Breast epithelium (tissue), 4 donors: ENCODE measurements at regions of chr20 and their contacts with region 1.

Region 1: GRCh38 chr20:63911176-63911575 is 16.2 kb downstream of the DNAJC5 start:
- DNase-seq: no peak
- H3K4me3 ChIP-seq: no peak overlapping the region
- H3K27ac ChIP-seq: no peak overlapping the region
- H3K4me1 ChIP-seq: no peaks in the 10 kb centered on the region
- H3K27me3 ChIP-seq: no peaks in the 10 kb centered on the region
- CTCF ChIP-seq: no peak
- POLR2A ChIP-seq: no peak

Region 2: DNA sequence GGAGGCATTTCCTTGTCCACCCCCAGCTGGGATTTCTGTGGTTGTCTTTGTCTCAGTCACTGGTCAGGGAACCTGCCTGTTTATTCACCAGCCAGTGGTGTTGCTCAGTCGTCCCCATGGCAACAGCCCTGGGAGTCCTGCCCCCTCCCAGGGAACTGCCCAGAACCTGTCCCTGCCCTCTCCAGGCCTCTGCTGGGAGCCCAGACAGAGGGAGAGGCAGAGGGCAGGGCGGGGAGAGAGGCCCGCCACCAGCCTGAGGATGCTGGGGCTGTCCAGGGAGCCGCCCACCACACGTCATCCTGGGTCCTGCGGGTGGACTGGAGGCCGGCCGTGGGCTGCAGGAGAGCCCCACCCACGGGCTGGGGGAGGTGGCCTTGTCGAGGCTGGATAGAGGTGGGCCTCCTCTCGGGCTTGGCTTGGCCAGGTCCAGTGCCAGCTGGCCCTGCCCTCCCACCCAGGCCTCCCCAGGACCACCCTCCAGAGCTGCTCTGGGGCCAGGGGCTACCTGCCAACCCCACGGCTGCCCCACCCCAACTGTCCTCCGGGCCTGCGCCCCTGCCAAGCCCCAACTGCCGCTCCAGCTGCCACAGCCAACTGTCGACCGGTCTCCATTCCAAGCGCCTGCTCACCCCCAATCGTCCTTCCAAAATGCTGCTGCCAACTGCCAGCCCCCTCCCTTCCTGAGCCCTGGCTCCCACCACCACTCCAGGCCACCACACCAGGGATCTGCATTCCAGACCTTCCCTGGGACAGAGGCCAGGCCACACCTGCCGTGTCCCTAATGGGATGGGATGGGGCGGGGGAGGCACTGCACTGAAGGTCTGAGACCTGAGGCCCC is 75.9 kb before region 1 on chr20:
- intact Hi-C with region 1: no loop called
- DNase-seq: peak; percentile 88 to 97
- H3K4me3 ChIP-seq: peak overlapping the region in 2 of 3 donors; percentile 19 to 47
- H3K27ac ChIP-seq: peak overlapping the region; percentile 80 to 94
- H3K4me1 ChIP-seq: peaks cover 8 to 16% of the 10 kb centered on the region in 2 donors
- H3K27me3 ChIP-seq: no peaks in the 10 kb centered on the region
- CTCF ChIP-seq: no peak
- POLR2A ChIP-seq: no peak

Region 3: DNA sequence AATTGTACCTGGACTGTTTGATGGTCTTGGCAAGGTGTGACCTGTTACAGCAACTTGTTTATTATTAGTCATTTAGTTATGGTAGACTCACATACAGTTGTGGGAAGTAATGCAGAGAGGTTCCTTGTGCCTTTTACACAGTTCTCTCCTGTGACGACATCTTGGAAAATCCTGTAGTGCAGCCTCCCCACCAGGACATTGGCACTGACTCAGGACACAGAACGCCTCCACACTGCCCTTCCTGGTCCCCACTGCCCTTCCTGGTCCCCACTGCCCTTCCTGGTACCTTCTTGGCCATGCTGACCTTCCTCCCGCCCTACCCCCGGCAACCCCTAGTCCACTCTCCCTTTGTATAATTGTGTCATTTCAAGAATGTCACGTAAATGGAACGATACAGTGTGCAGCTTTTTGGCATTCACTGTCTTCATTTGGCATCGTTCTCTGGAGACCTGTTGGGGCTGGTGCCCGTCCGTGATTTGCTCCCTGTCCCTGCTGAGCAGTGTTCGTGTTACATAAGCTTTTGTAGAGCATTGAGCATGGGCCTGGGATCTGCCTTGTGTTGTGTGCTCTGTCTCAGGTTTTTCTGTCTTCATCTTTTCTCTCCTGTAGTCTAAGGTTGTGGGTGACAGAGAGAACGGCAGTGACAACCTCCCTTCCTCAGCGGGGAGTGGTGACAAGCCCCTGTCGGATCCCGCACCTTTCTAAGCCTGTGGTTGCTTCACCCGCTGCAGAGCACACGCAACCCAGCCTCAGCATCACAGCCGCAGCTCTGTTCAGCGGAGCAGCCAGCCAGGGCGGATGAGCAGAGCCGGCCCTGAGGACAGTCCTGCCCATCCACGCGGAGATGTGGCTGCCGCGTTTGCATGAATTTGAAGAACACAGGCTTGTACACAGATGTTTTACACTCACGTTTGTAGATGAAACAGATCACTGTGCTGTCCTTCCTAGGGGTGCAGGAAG is 21.7 kb before region 1 on chr20:
- intact Hi-C with region 1: loop called (anchors 1 kb)
- DNase-seq: peak in 1 of 2 donors; percentile 68
- H3K4me3 ChIP-seq: no peak overlapping the region
- H3K27ac ChIP-seq: peak overlapping the region; percentile 87 to 91
- H3K4me1 ChIP-seq: peaks cover 4 to 13% of the 10 kb centered on the region in 2 donors
- H3K27me3 ChIP-seq: no peaks in the 10 kb centered on the region
- CTCF ChIP-seq: no peak
- POLR2A ChIP-seq: no peak